ENCODE measurements at regions of chr20 and their contacts with region 1.

Region 1: GRCh38 chr20:35329435-35330139 is 37.4 kb upstream of the FAM83C start:
- DNase-seq: peak; percentile 82
- ATAC-seq: peak; percentile 99
- H3K4me3 Mint-ChIP-seq: no peak overlapping the region
- H3K27ac Mint-ChIP-seq: 0 out of 2 replicates have a peak overlapping the region, but pooled peaks have one; percentile 40
- H3K4me1 Mint-ChIP-seq: peaks cover 11% of the 10 kb centered on the region; the same call in 1 of the 2 replicates
- H3K27me3 Mint-ChIP-seq: no peaks in the 10 kb centered on the region
- CTCF ChIP-seq: peak; percentile 58

Region 2: GRCh38 chr20:35297155-35297554 is 32.4 kb before region 1 on chr20:
- CTCF ChIA-PET with region 1: interaction called, 25 read pairs
- POLR2A ChIA-PET with region 1: no interaction called
- DNase-seq: no peak
- ATAC-seq: peak; percentile 43
- H3K4me3 Mint-ChIP-seq: no peak overlapping the region
- H3K27ac Mint-ChIP-seq: no peak overlapping the region; the same call in 1 of the 2 replicates
- H3K4me1 Mint-ChIP-seq: peaks cover 5% of the 10 kb centered on the region; the same call in 1 of the 2 replicates
- H3K27me3 Mint-ChIP-seq: peaks cover 4% of the 10 kb centered on the region
- CTCF ChIP-seq: no peak

Region 3: GRCh38 chr20:35318502-35319157 is 11.0 kb before region 1 on chr20:
- CTCF ChIA-PET with region 1: interaction called, 102 read pairs
- POLR2A ChIA-PET with region 1: no interaction called
- DNase-seq: no peak
- ATAC-seq: no peak; the same call in 1 of the 2 replicates
- H3K4me3 Mint-ChIP-seq: no peak overlapping the region
- H3K27ac Mint-ChIP-seq: 0 out of 2 replicates have a peak overlapping the region, but pooled peaks have one; percentile 33
- H3K4me1 Mint-ChIP-seq: peaks cover 18% of the 10 kb centered on the region
- H3K27me3 Mint-ChIP-seq: no peaks in the 10 kb centered on the region
- CTCF ChIP-seq: no peak

Region 4: DNA sequence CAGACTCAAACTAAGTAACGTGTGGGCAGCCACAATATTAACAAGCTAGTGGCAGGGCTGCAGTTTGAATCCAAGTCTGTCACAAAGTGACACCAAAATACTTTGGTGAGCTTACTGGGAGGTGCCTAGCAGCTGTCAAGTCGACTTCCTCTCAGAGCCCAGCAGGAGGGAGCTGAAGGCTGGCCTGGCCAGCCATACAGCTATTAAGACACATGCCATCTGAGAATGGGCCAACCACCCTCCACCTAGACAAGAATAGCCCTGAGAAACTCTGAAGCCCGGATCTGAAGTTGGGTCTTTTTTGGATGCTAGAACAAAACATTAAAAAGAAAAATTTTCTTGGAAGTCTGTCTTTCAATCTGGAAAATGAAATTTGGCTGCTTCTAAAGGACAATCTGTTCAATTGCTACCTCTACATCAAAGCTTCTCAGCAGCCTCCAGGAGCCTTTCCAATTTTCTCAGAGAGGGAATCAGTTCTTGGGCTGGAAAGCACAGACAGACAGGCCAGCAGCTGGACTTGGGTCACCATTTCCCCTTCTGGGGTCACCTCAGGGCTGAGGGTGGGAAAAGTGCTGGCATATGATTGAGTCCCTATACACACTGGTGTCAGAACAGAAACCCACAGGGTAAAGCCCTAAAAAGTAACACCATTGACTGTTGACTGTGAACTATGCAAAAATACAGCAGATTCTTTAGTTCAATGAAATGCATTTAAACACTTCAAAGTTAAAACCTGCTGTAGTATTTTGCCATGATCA is 39.3 kb after region 1 on chr20:
- CTCF ChIA-PET with region 1: interaction called, 10 read pairs
- POLR2A ChIA-PET with region 1: no interaction called
- DNase-seq: peak; percentile 14
- ATAC-seq: no peak; the same call in 1 of the 2 replicates
- H3K4me3 Mint-ChIP-seq: no peak overlapping the region
- H3K27ac Mint-ChIP-seq: no peak overlapping the region
- H3K4me1 Mint-ChIP-seq: peaks cover 11% of the 10 kb centered on the region
- H3K27me3 Mint-ChIP-seq: no peaks in the 10 kb centered on the region
- CTCF ChIP-seq: no peak

Region 5: GRCh38 chr20:35447082-35447789 is 117.6 kb after region 1 on chr20:
- CTCF ChIA-PET with region 1: interaction called, 22 read pairs
- POLR2A ChIA-PET with region 1: no interaction called
- DNase-seq: peak; percentile 96
- ATAC-seq: peak; percentile 88
- H3K4me3 Mint-ChIP-seq: peak overlapping the region; percentile 80
- H3K27ac Mint-ChIP-seq: no peak overlapping the region
- H3K4me1 Mint-ChIP-seq: peaks cover 12% of the 10 kb centered on the region
- H3K27me3 Mint-ChIP-seq: no peaks in the 10 kb centered on the region
- CTCF ChIP-seq: peak; percentile 95